Sciatic nerve (tissue), 2 donors: ENCODE measurements at regions of chr11 and their contacts with region 1.

Region 1: GRCh38 chr11:58075781-58076180 is 45.0 kb downstream of the OR6Q1 start:
- DNase-seq: no peak
- ATAC-seq: no peak

Region 2: DNA sequence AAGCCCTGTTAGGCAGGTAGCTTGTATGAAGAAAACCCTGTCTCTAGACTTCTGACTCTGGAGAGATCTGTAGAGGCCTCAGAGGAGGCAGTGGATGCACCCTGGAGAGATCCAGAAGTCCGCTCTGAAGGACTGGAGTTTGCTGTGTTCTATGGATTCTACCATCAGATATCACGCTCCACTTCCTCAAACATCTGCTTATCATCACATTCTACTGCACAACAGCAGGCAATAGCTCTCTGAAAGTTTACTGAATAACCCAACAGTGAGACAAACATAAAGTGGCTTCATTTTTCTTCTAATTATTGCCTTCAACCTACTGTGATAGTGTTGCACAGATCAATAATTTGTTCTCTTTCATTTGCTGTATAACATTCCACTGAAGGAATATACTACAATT is 111.1 kb before region 1 on chr11:
- intact Hi-C with region 1: no loop called
- DNase-seq: no peak
- ATAC-seq: no peak

Region 3: DNA sequence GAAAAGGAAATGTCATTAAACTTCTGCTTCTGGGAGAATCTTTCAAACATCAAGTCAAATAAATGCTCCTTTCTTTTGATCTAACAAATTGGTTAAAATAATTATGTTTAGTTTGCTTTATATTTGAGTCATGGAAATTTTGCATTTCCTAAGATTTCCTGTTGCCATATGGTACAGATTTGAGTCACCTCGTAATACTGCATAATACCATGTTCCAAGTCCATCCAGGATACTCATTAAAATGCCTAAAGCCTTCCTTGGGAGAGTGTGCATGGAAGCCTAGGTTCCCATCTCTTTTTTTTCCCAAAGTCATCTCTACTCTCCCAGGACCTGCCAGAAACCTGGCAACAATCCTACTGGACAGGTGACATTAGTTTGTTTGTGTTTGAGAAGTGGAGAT is 45.3 kb after region 1 on chr11:
- intact Hi-C with region 1: loop called (anchors 1 kb)
- DNase-seq: no peak
- ATAC-seq: no peak